CD4-positive, alpha-beta memory T cell (primary cell): ENCODE measurements at regions of chr18 and their contacts with region 1.

Region 1: DNA sequence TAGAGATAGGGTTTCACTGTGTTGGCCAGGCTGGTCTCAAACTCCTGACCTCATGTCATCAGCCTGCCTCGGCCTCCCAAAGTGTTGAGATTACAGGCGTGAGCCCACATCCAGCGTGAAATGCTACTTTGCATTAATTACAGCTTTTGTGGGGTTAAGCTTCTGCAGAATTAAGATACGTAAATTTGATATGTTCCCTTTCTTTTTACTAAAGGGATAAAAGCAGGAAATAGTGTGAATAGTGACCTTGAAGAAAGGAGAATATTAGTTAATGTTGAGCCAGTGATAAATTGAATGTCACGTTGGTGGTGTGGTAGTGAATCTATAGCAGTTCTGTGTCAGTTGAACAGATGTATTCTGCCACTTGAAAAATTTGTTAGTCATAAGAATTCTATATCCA is 16.9 kb downstream of the SMCHD1 start:
- DNase-seq: no peak
- H3K4me3 ChIP-seq: no peak overlapping the region
- H3K4me3 Mint-ChIP-seq: peak overlapping the region in 1 of 8 donors; percentile 36
- H3K27ac ChIP-seq: no peak overlapping the region
- H3K27ac Mint-ChIP-seq: peak overlapping the region in 4 of 7 donors; percentile 23 to 70 (median 61)
- H3K4me1 ChIP-seq: peaks cover 56% of the 10 kb centered on the region
- H3K4me1 Mint-ChIP-seq: peaks cover 49 to 81% (median 65%) of the 10 kb centered on the region in 4 donors
- H3K27me3 ChIP-seq: no peaks in the 10 kb centered on the region
- H3K27me3 Mint-ChIP-seq: no peaks in the 10 kb centered on the region

Region 2: DNA sequence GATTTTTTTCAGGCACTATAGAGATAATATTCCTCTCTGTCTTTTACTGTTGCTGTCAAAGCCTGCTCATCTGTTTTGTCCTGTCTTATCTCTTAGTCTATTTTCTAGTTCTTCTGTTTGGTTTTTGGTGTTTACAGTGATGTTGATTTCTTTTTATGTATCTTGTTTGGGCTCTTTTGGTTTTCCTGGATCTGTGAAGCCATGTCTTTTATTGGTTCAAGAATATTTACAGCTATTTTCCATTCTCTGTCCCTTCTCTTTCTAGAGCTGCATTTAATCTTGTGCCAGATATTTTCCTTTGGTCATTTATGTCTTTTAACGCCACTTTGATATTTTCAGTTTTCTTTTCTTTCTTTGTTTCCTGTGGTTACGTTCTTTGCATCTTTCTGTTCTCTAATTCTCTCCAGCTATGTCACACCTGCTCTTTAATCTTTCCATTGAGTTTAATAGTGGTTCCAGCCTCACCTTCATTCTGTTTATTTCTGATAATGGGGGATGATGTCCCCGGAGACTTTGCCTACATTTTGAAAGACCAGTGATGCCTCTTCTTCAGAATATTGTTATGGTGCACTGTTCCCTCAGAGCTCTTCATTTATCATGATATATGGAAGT is 15.1 kb after region 1 on chr18:
- CTCF ChIA-PET with region 1: interaction called, 3 read pairs
- POLR2A ChIA-PET with region 1: no interaction called
- intact Hi-C with region 1: loop called (anchors 2 kb)
- DNase-seq: no peak
- H3K4me3 ChIP-seq: no peak overlapping the region
- H3K4me3 Mint-ChIP-seq: peak overlapping the region in 7 of 8 donors; percentile 3 to 74 (median 51)
- H3K27ac ChIP-seq: no peak overlapping the region
- H3K27ac Mint-ChIP-seq: peak overlapping the region; percentile 7 to 88 (median 40)
- H3K4me1 ChIP-seq: peaks cover 49% of the 10 kb centered on the region
- H3K4me1 Mint-ChIP-seq: peaks cover 42 to 70% (median 61%) of the 10 kb centered on the region in 4 donors
- H3K27me3 ChIP-seq: no peaks in the 10 kb centered on the region
- H3K27me3 Mint-ChIP-seq: no peaks in the 10 kb centered on the region

Region 3: GRCh38 chr18:2706903-2707302 is 34.5 kb after region 1 on chr18:
- CTCF ChIA-PET with region 1: no interaction called
- POLR2A ChIA-PET with region 1: interaction called, 3 read pairs
- intact Hi-C with region 1: loop called (anchors 5 kb)
- DNase-seq: no peak
- H3K4me3 ChIP-seq: no peak overlapping the region
- H3K4me3 Mint-ChIP-seq: no peak overlapping the region
- H3K27ac ChIP-seq: no peak overlapping the region
- H3K27ac Mint-ChIP-seq: peak overlapping the region in 5 of 7 donors; percentile 36 to 74 (median 61)
- H3K4me1 ChIP-seq: no peaks in the 10 kb centered on the region
- H3K4me1 Mint-ChIP-seq: peaks cover 19 to 57% (median 35%) of the 10 kb centered on the region in 4 donors
- H3K27me3 ChIP-seq: no peaks in the 10 kb centered on the region
- H3K27me3 Mint-ChIP-seq: no peaks in the 10 kb centered on the region

Region 4: DNA sequence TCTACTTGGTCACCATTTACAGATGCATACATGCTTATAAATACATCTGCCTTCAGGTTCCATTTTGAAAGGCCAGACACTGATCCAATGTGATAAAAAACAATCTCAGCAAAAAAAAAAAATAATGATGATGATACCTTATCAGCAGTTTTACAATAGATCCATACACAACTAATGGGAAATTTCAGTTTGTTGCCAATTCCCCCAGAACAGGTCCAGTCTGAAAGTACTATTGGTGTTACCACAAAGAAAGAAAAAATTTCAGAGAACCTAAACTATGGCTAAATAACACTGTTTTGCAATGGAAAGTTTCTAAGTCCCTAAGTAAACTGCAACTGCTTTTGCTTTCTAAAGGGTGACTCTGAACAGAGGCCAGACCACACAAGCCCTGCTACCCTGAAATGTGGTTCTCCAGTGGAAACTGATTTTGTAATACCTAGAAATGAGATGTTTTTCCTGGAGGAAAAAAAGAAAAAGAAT is 286.4 kb after region 1 on chr18:
- CTCF ChIA-PET with region 1: no interaction called
- POLR2A ChIA-PET with region 1: no interaction called
- intact Hi-C with region 1: no loop called
- DNase-seq: peak in 2 of 5 donors; percentile 37 to 64
- H3K4me3 ChIP-seq: peak overlapping the region in 1 of 2 donors; percentile 9
- H3K4me3 Mint-ChIP-seq: peak overlapping the region; percentile 4 to 89 (median 73)
- H3K27ac ChIP-seq: peak overlapping the region; percentile 79
- H3K27ac Mint-ChIP-seq: peak overlapping the region; percentile 88 to 99 (median 98)
- H3K4me1 ChIP-seq: peaks cover 95% of the 10 kb centered on the region
- H3K4me1 Mint-ChIP-seq: peaks cover 68 to 97% (median 85%) of the 10 kb centered on the region in 4 donors
- H3K27me3 ChIP-seq: no peaks in the 10 kb centered on the region
- H3K27me3 Mint-ChIP-seq: no peaks in the 10 kb centered on the region